WTC11 (cell line): ENCODE measurements at regions of chr16 and their contacts with region 1.

Region 1: GRCh38 chr16:72832621-72833248 is 215.2 kb downstream of the ZFHX3 start:
- DNase-seq: peak; percentile 93
- ATAC-seq: peak; percentile 87
- H3K4me3 Mint-ChIP-seq: no peak overlapping the region
- H3K27ac Mint-ChIP-seq: no peak overlapping the region
- H3K4me1 Mint-ChIP-seq: peaks cover 11% of the 10 kb centered on the region
- H3K27me3 Mint-ChIP-seq: no peaks in the 10 kb centered on the region
- CTCF ChIP-seq: peak; percentile 93

Region 2: DNA sequence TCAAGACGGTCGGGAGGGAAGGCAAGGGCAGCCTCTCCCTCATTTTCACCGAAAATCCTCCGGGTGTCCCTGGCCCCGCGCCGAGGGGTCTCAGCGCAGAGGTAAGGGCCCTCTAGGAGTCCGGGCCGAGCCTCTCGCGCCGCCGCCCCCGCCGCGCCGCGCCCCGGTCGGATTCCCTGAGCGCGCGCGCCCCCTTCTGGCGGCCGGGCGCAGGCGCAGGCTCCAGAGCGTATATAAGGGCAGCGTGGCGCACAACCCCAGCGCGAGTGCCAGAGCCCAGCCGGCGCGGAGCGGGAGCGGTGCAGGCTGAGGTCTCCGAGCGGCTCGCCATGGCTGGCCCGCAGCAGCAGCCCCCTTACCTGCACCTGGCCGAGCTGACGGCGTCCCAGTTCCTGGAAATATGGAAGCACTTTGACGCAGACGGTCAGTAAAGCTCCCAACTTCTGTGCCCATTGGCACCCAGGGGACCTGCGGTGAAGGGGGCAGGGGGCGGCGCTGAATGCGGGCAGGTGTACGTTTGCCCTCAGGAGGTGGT is 1474.2 kb before region 1 on chr16 and contains the start of gene CALB2:
- CTCF ChIA-PET with region 1: no interaction called
- POLR2A ChIA-PET with region 1: no interaction called
- DNase-seq: peak; percentile 81
- ATAC-seq: peak; percentile 95
- H3K4me3 Mint-ChIP-seq: peak within 1 kb of the TSS; percentile 69
- H3K27ac Mint-ChIP-seq: no peak within 1 kb of the TSS
- H3K4me1 Mint-ChIP-seq: peaks cover 11% of the 10 kb centered on the region
- H3K27me3 Mint-ChIP-seq: peaks cover 34% of the 10 kb centered on the region
- CTCF ChIP-seq: peak; percentile 93
- total RNA-seq, gene CALB2: 1.6 to 2.6 TPM (median 2.5 TPM) in 3 replicates

Region 3: GRCh38 chr16:72723781-72724180 is 109.0 kb before region 1 on chr16:
- CTCF ChIA-PET with region 1: interaction called, 12 read pairs
- POLR2A ChIA-PET with region 1: no interaction called
- DNase-seq: no peak
- ATAC-seq: no peak
- H3K4me3 Mint-ChIP-seq: no peak overlapping the region
- H3K27ac Mint-ChIP-seq: no peak overlapping the region
- H3K4me1 Mint-ChIP-seq: peaks cover 40% of the 10 kb centered on the region
- H3K27me3 Mint-ChIP-seq: no peaks in the 10 kb centered on the region
- CTCF ChIP-seq: no peak

Region 4: GRCh38 chr16:72811188-72811720 is 21.5 kb before region 1 on chr16:
- CTCF ChIA-PET with region 1: interaction called, 75 read pairs
- POLR2A ChIA-PET with region 1: no interaction called
- DNase-seq: no peak
- ATAC-seq: no peak
- H3K4me3 Mint-ChIP-seq: no peak overlapping the region
- H3K27ac Mint-ChIP-seq: no peak overlapping the region
- H3K4me1 Mint-ChIP-seq: peaks cover 11% of the 10 kb centered on the region
- H3K27me3 Mint-ChIP-seq: no peaks in the 10 kb centered on the region
- CTCF ChIP-seq: no peak

Region 5: GRCh38 chr16:72856797-72857196 is 24.1 kb after region 1 on chr16:
- CTCF ChIA-PET with region 1: interaction called, 98 read pairs
- POLR2A ChIA-PET with region 1: no interaction called
- DNase-seq: peak; percentile 58
- ATAC-seq: peak; percentile 84
- H3K4me3 Mint-ChIP-seq: no peak overlapping the region
- H3K27ac Mint-ChIP-seq: no peak overlapping the region
- H3K4me1 Mint-ChIP-seq: peaks cover 30% of the 10 kb centered on the region
- H3K27me3 Mint-ChIP-seq: no peaks in the 10 kb centered on the region
- CTCF ChIP-seq: no peak

Region 6: GRCh38 chr16:72921630-72922029 is 88.9 kb after region 1 on chr16:
- CTCF ChIA-PET with region 1: no interaction called
- POLR2A ChIA-PET with region 1: no interaction called
- DNase-seq: no peak
- ATAC-seq: no peak
- H3K4me3 Mint-ChIP-seq: no peak overlapping the region
- H3K27ac Mint-ChIP-seq: no peak overlapping the region
- H3K4me1 Mint-ChIP-seq: peaks cover 7% of the 10 kb centered on the region; the same call in 1 of the 2 replicates
- H3K27me3 Mint-ChIP-seq: no peaks in the 10 kb centered on the region
- CTCF ChIP-seq: no peak

Region 7: GRCh38 chr16:73022534-73022933 is 189.8 kb after region 1 on chr16:
- CTCF ChIA-PET with region 1: interaction called, 11 read pairs
- POLR2A ChIA-PET with region 1: no interaction called
- DNase-seq: no peak
- ATAC-seq: no peak
- H3K4me3 Mint-ChIP-seq: no peak overlapping the region
- H3K27ac Mint-ChIP-seq: no peak overlapping the region
- H3K4me1 Mint-ChIP-seq: peaks cover 32% of the 10 kb centered on the region
- H3K27me3 Mint-ChIP-seq: peaks cover 79% of the 10 kb centered on the region
- CTCF ChIP-seq: no peak

Region 8: GRCh38 chr16:73172241-73172972 is 339.7 kb after region 1 on chr16:
- CTCF ChIA-PET with region 1: interaction called, 10 read pairs
- POLR2A ChIA-PET with region 1: no interaction called
- DNase-seq: no peak
- ATAC-seq: peak; percentile 49
- H3K4me3 Mint-ChIP-seq: peak overlapping the region; percentile 33
- H3K27ac Mint-ChIP-seq: peak overlapping the region; percentile 86; the same call in 1 of the 2 replicates
- H3K4me1 Mint-ChIP-seq: peaks cover 50% of the 10 kb centered on the region
- H3K27me3 Mint-ChIP-seq: peaks cover 19% of the 10 kb centered on the region
- CTCF ChIP-seq: no peak